Naive thymus-derived CD4-positive, alpha-beta T cell (primary cell): ENCODE measurements at regions of chr20 and their contacts with region 1.

Region 1: DNA sequence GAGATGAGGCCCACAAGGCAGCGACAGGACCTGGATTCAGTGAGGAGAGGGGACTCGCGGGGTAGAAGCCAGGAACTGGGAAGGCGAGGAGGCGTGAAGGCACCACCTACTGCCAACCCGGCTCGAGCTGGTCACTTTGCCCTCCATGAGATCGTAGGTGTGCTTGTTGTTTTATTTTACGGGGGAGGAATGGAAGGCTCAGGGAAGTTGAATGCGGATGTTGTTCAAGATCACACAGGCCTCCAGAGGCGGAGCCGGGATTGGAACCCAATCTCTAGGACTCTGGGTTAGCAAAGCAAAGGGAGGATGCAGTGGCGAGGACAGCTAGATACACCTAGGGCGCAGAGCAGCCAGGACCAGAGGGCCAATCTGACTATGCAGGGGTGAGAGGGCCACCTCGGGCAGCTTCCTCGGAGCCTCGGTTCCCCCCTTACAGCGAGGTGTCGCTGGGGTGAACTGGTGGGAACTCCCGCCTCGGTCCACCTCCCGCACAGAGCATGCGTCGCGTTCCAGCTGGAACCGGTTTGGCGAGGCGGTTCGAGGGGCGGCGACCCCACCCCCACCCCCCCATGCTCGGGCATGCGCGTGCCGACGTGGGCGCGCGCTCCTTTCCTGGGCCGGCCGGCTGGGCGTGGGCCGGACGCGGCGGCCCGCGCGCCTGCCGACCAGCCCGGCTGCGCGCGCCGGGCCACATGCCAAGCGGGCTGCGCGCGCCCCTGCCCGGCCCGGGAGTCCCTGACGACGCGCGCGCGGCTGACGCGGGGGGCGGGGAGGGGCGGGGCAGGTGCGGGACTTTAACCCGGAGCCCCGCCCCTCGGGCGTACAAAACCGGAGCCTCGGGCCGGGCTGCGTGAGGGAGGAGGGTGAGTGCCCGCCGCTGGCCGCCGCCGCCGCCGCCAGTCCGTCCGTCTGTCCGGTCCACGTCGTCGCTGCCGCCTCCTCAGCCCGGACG is 80.4 kb upstream of the MYL9 start:
- DNase-seq: peak; percentile 76 to 89 (median 86)
- ATAC-seq: peak; percentile 93
- H3K4me3 ChIP-seq: peak overlapping the region; percentile 73
- H3K4me3 Mint-ChIP-seq: peak overlapping the region; percentile 74 to 97 (median 83)
- H3K27ac ChIP-seq: peak overlapping the region; percentile 85
- H3K27ac Mint-ChIP-seq: peak overlapping the region; percentile 88 to 97 (median 95)
- H3K4me1 ChIP-seq: peaks cover 38 to 39% of the 10 kb centered on the region in 2 donors
- H3K4me1 Mint-ChIP-seq: peaks cover 34 to 51% (median 45%) of the 10 kb centered on the region in 7 donors
- H3K27me3 ChIP-seq: no peaks in the 10 kb centered on the region
- H3K27me3 Mint-ChIP-seq: peaks cover 0 to 6% (median 0%) of the 10 kb centered on the region in 5 donors

Region 2: DNA sequence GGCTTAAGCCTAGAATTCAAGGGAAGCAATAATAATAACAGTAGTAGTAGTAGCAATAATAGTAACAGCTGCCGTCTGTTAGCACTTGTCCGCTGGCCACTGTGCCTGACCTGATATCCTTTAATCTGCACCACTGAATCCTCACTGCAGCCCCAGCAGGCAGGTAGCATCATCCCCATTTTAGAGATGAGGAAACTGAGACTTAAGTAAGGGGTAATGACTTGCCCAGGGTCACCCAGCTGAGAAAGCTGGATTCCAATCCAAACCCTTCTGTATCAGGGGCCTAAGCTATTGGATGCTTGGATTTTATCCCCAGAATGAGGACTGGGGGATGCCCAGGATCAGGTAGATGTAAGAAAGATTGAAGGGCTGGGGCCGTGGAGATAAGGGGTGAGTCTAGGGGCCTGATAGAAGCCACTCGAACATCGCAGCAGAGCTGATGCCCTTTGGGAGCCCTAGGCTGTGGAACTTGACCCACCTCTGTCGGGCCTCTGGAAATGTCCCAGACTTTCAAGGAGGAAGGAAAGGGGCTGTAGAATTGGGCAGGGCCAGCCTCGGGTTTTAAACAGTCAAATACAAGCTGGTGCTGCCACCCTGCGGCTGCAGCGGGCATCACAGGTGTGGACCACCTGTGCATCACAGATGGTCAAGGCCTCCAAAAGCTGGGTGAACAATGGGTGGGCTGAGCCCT is 21.7 kb before region 1 on chr20:
- CTCF ChIA-PET with region 1: no interaction called
- POLR2A ChIA-PET with region 1: no interaction called
- intact Hi-C with region 1: loop called in 1 of 2 experiments (anchors 2 kb)
- DNase-seq: peak in 8 of 9 donors; percentile 41 to 73 (median 50)
- ATAC-seq: peak; percentile 51
- H3K4me3 ChIP-seq: no peak overlapping the region
- H3K4me3 Mint-ChIP-seq: no peak overlapping the region
- H3K27ac ChIP-seq: no peak overlapping the region
- H3K27ac Mint-ChIP-seq: no peak overlapping the region
- H3K4me1 ChIP-seq: no peaks in the 10 kb centered on the region
- H3K4me1 Mint-ChIP-seq: peaks cover 0 to 8% (median 4%) of the 10 kb centered on the region in 7 donors
- H3K27me3 ChIP-seq: no peaks in the 10 kb centered on the region
- H3K27me3 Mint-ChIP-seq: peaks cover 0 to 15% (median 5%) of the 10 kb centered on the region in 5 donors

Region 3: DNA sequence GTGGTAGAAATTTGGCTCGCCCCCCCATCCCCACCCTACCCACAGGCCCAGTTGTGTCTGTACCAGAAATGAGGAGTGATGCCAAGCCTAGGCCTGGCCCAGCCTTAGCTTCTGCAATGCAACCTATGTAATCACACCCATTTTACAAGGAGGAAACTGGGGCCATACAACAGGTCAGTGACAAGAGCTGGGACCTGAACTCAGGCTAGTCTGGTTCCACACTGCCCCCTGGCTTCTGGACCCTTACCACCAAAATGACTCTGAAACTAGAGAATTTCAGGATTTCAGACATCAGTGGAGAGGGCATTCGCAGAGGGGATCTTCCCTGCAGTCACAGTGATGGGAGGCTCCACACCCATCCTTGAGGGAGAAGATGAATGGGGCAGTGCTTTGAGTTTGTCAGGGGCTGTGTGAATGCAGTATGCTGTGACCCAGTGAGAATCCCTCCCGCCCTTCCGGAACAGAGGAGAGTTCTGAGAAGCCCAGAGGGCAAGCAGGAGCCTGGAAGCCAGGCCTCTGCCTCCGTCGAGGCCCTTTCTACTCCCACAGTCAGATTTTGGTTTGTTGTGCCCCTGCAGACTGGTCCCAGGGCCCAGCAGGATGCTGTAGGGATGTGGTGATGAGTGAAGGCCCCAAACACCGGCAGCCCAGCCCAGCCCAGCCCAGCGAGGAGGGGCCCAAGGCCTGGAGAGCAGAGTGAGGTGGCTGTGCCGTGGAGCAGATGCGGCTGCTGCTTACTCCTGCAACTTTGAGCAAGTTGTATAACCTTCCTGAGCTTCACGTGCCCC is 32.3 kb after region 1 on chr20:
- CTCF ChIA-PET with region 1: interaction called, 5 read pairs
- POLR2A ChIA-PET with region 1: interaction called, 7 read pairs
- intact Hi-C with region 1: loop called (anchors 1 to 2 kb)
- DNase-seq: no peak
- ATAC-seq: no peak
- H3K4me3 ChIP-seq: no peak overlapping the region
- H3K4me3 Mint-ChIP-seq: peak overlapping the region in 3 of 10 donors; percentile 1 to 77 (median 63)
- H3K27ac ChIP-seq: peak overlapping the region; percentile 68
- H3K27ac Mint-ChIP-seq: peak overlapping the region in 4 of 9 donors; percentile 27 to 92 (median 86)
- H3K4me1 ChIP-seq: peaks cover 23 to 24% of the 10 kb centered on the region in 2 donors
- H3K4me1 Mint-ChIP-seq: peaks cover 30 to 54% (median 46%) of the 10 kb centered on the region in 7 donors
- H3K27me3 ChIP-seq: no peaks in the 10 kb centered on the region
- H3K27me3 Mint-ChIP-seq: no peaks in the 10 kb centered on the region

Region 4: GRCh38 chr20:36745927-36746659 is 285.2 kb after region 1 on chr20 and contains the start of gene NDRG3:
- CTCF ChIA-PET with region 1: no interaction called
- POLR2A ChIA-PET with region 1: interaction called, 3 read pairs
- intact Hi-C with region 1: loop called in 1 of 2 experiments (anchors 1 kb)
- DNase-seq: peak; percentile 81 to 93 (median 91)
- ATAC-seq: peak; percentile 100
- H3K4me3 ChIP-seq: peak within 1 kb of the TSS; percentile 93
- H3K4me3 Mint-ChIP-seq: peak within 1 kb of the TSS; percentile 85 to 94 (median 90)
- H3K27ac ChIP-seq: peak within 1 kb of the TSS; percentile 70
- H3K27ac Mint-ChIP-seq: peak within 1 kb of the TSS; percentile 83 to 97 (median 88)
- H3K4me1 ChIP-seq: peaks cover 5 to 7% of the 10 kb centered on the region in 2 donors
- H3K4me1 Mint-ChIP-seq: peaks cover 20 to 41% (median 29%) of the 10 kb centered on the region in 7 donors
- H3K27me3 ChIP-seq: no peaks in the 10 kb centered on the region
- H3K27me3 Mint-ChIP-seq: no peaks in the 10 kb centered on the region
- total RNA-seq, gene NDRG3: 20.8 to 30.6 (median 28.9) TPM

Region 5: GRCh38 chr20:37095599-37096414 is 634.9 kb after region 1 on chr20 and contains the start of gene RBL1:
- CTCF ChIA-PET with region 1: no interaction called
- POLR2A ChIA-PET with region 1: no interaction called
- intact Hi-C with region 1: loop called (anchors 10 kb)
- DNase-seq: peak; percentile 72 to 93 (median 91)
- ATAC-seq: peak; percentile 91
- H3K4me3 ChIP-seq: peak within 1 kb of the TSS; percentile 93
- H3K4me3 Mint-ChIP-seq: peak within 1 kb of the TSS; percentile 88 to 100 (median 98)
- H3K27ac ChIP-seq: peak within 1 kb of the TSS; percentile 91
- H3K27ac Mint-ChIP-seq: peak within 1 kb of the TSS; percentile 96 to 100 (median 100)
- H3K4me1 ChIP-seq: peaks cover 17 to 18% of the 10 kb centered on the region in 2 donors
- H3K4me1 Mint-ChIP-seq: peaks cover 15 to 42% (median 34%) of the 10 kb centered on the region in 7 donors
- H3K27me3 ChIP-seq: no peaks in the 10 kb centered on the region
- H3K27me3 Mint-ChIP-seq: peaks cover 0 to 6% (median 0%) of the 10 kb centered on the region in 5 donors
- total RNA-seq, gene RBL1: 27.4 to 51.2 (median 30.6) TPM